K562 (cell line): ENCODE measurements at regions of chr1 and their contacts with region 1.

Region 1: DNA sequence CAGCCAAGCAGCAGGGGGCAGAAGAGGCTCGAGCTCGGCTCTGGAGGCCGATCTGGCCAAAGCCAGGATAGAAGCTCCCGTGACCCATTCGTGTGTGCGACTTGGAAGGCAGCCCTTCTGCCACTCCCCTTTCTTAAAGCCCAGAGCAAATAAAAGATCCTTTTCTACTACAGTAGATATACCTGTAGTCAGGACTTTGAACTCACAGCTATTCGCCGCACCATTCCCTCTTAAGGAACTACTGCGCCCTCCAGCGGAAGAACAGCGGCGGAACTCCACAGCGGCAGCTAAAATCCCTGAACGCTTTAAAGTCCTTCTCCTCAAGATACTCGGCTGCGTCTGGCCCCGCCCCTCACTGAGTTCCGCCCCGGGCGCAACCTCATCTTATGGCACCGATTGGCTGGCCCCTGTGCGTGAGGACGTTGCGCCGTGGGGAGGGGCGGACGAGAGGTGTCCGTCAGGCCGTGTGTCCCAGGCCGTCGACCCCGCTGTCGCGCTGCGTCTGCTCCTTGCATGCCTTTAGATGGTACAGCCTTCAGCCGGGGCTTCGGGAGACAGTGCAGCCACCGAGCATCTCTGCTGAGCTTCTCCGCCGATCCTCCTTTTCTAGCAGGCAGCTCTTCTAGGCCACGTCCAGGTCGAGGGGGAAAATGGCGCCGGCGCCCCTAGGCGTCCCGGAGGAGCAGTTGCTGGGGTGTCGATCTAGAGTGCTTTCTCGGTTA is at the start of gene LRIG2:
- DNase-seq: peak; percentile 96 to 100 (median 97)
- ATAC-seq: peak; percentile 97
- H3K4me3 ChIP-seq: peak within 1 kb of the TSS; percentile 96
- H3K27ac ChIP-seq: peak within 1 kb of the TSS; percentile 96
- H3K4me1 ChIP-seq: peaks cover 16% of the 10 kb centered on the region in 2 experiments
- H3K27me3 ChIP-seq: no peaks in the 10 kb centered on the region
- CTCF ChIP-seq: peak; percentile 75 to 97 (median 95)
- EP300 ChIP-seq: no peak; the same call in 1 of the 2 replicates
- POLR2A ChIP-seq: peak; percentile 98
- RAD21 ChIP-seq: peak; percentile 81 to 87
- polyA plus RNA-seq, gene LRIG2: 1.8 to 3.3 TPM

Region 2: GRCh38 chr1:112809253-112809684 is 263.6 kb before region 1 on chr1:
- CTCF ChIA-PET with region 1: interaction called, 7 read pairs
- POLR2A ChIA-PET with region 1: interaction called, 3 read pairs
- in situ Hi-C with region 1: no loop called
- intact Hi-C with region 1: loop called (anchors 2 kb)
- DNase-seq: peak; percentile 78 to 88 (median 82)
- ATAC-seq: peak; percentile 97
- H3K4me3 ChIP-seq: no peak overlapping the region
- H3K27ac ChIP-seq: no peak overlapping the region
- H3K4me1 ChIP-seq: peaks cover 2 to 6% of the 10 kb centered on the region in 2 experiments; a peak in 3 of 5 replicates
- H3K27me3 ChIP-seq: peaks cover 19 to 20% of the 10 kb centered on the region in 2 experiments; a peak in 4 of 5 replicates
- CTCF ChIP-seq: peak; percentile 89 to 98 (median 95)
- EP300 ChIP-seq: no peak
- POLR2A ChIP-seq: no peak
- RAD21 ChIP-seq: peak; percentile 94 to 98

Region 3: DNA sequence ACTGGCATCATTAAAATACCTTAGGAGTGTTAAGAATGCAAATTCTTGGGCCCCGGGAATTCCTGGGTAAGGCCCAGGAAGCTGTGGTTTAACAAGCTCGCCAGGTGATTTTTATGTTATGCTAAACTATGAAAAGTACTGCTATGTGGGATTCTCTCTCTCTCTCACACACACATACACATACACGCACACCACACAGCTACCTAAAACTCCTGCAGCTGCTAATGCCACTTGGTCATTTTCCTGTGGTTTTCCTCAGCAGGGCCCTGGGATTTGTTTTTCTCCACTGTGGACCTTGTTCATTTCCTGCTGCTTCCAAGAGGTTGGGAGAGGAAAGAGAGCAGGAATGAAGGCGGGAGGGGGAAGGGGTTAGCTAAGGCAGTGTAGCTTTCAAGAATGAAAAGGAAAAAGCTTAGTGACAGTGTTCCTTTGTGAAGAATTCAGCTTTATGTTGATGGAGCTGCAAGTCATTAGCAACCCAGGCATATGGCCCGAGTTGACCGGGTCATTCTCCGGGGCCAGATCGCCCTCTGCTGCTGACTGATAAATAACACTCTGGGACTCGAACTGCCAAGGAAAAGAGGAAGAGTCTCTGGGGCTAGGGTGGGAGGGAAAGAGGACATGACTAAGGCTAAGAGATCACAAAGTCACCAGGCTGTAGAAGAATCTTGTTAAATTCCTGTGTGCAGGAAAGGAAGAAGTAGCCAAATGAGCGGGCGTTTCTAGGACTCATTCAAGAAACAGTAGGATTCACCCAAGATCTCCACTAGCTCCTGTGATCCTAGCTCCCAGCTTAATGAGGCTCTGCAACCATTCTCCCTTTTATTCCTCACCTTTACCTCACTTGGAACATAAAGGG is 30.4 kb before region 1 on chr1:
- CTCF ChIA-PET with region 1: no interaction called
- POLR2A ChIA-PET with region 1: interaction called, 14 read pairs
- in situ Hi-C with region 1: no loop called
- intact Hi-C with region 1: loop called (anchors 2 kb)
- DNase-seq: peak; percentile 85 to 96 (median 90)
- ATAC-seq: peak; percentile 97
- H3K4me3 ChIP-seq: no peak overlapping the region
- H3K27ac ChIP-seq: peak overlapping the region; percentile 72
- H3K4me1 ChIP-seq: peaks cover 18 to 49% of the 10 kb centered on the region in 2 experiments
- H3K27me3 ChIP-seq: no peaks in the 10 kb centered on the region
- CTCF ChIP-seq: peak; percentile 90 to 98 (median 93)
- EP300 ChIP-seq: peak; percentile 73
- POLR2A ChIP-seq: no peak
- RAD21 ChIP-seq: peak; percentile 98

Region 4: DNA sequence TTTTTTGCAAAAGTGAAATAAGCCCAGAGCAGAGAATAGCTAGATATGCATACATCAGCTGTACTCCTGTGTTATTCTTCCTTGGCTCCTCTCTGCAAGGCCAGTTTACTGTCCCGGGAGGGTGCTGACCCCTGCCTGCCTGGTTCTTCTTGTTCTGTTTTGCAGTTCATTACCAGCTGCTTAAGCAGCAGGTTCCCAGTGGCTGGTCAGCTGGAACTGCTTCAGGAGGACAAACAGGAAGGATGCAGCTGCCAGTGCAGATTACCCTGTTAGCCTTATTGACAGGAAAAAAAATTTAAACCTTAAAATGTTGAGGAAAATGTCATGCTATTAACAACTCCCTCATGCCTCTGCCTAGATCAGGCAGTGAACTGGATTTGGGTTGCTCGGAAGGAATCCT is 15.9 kb before region 1 on chr1:
- CTCF ChIA-PET with region 1: no interaction called
- POLR2A ChIA-PET with region 1: interaction called, 48 read pairs
- in situ Hi-C with region 1: no loop called
- intact Hi-C with region 1: no loop called
- DNase-seq: no peak
- ATAC-seq: peak; percentile 28; the same call in 1 of the 3 replicates
- H3K4me3 ChIP-seq: no peak overlapping the region
- H3K27ac ChIP-seq: no peak overlapping the region
- H3K4me1 ChIP-seq: peaks cover 7 to 14% of the 10 kb centered on the region in 2 experiments; a peak in 4 of 5 replicates
- H3K27me3 ChIP-seq: no peaks in the 10 kb centered on the region
- CTCF ChIP-seq: peak in 1 of 3 experiments; percentile 7; a peak in 1 of 6 replicates
- EP300 ChIP-seq: no peak
- POLR2A ChIP-seq: no peak
- RAD21 ChIP-seq: no peak

Region 5: DNA sequence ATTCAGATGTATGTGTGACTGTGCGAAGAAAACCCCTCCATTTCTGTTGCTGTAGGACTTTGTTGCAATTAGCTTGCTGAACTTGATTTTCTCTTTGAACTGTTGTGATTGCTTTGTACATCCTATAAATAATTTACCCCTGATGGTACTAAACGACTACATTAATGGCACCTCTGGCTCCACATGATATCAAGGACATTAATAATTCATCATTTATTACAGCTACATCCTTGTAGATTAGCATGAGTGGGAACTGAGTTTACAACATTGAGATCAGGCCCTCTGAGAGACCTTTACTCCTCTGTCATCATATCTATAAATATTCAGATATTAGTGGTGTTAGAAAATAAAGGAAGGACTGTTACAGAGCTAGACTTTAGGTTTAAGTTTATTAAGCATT is 13.6 kb after region 1 on chr1:
- CTCF ChIA-PET with region 1: no interaction called
- POLR2A ChIA-PET with region 1: interaction called, 17 read pairs
- in situ Hi-C with region 1: no loop called
- intact Hi-C with region 1: no loop called
- DNase-seq: no peak
- ATAC-seq: no peak
- H3K4me3 ChIP-seq: no peak overlapping the region
- H3K27ac ChIP-seq: no peak overlapping the region
- H3K4me1 ChIP-seq: peaks cover 3 to 10% of the 10 kb centered on the region in 2 experiments; a peak in 3 of 5 replicates
- H3K27me3 ChIP-seq: no peaks in the 10 kb centered on the region
- CTCF ChIP-seq: no peak
- EP300 ChIP-seq: no peak
- POLR2A ChIP-seq: no peak
- RAD21 ChIP-seq: no peak

Region 6: DNA sequence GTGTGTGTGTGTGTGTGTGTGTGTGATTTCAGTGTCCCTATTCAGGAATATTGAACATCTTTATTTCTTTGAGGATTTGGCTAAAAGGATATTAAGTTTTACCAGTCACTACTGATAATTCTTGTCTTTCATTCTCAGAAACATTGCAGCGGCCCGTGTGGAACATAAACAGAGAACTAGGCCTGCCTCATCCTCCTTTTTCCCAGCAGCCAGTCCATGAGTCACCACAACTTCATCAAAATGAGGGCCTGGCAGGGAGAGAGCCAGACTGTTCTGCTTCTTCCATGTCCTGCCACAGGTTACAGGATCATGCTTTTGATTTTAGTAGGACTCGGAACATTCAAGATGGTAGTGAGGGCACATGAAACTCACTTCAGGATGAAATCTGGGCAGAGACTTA is 50.8 kb after region 1 on chr1:
- CTCF ChIA-PET with region 1: no interaction called
- POLR2A ChIA-PET with region 1: no interaction called
- in situ Hi-C with region 1: no loop called
- intact Hi-C with region 1: no loop called
- DNase-seq: no peak
- ATAC-seq: no peak
- H3K4me3 ChIP-seq: no peak overlapping the region
- H3K27ac ChIP-seq: no peak overlapping the region
- H3K4me1 ChIP-seq: no peaks in the 10 kb centered on the region
- H3K27me3 ChIP-seq: no peaks in the 10 kb centered on the region
- CTCF ChIP-seq: no peak
- EP300 ChIP-seq: no peak
- POLR2A ChIP-seq: no peak
- RAD21 ChIP-seq: no peak

Region 7: DNA sequence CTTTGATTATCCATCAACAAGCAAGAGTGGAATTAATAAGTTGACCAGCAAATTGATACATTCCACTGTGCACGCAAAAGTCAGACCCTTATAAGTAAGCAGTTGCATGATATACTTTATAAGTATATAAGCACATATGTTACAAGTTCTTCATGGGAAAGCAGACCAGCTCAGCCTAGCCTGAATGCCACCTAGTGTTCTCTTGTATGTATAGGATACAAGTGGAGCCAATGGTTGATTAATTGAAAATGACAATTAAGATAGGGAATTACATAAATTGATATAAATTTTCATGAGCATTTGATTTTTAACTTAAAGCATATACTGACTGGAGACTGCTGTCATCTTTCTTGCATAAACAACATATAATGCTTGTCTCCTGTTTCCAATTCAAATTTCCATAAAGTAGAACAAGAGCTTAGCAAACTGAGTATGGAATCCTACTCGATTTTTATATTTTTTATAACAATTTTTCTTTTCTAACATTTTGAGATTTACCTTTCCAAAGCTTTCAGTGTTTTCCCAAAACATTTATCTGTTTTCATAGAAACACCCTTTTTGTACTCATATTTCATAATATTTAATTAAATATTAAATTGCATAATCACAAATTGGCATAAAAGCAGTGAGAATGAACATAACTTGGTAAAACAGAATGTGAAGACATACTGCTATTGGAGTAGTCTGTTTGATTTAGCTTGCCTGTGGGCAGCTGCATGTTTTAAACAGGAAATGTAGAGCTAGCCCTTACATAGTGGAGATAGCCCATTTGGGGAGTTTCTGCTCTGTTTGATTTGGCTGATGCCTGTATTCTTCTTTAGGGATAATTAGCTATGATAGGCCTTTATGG is 380.2 kb after region 1 on chr1:
- CTCF ChIA-PET with region 1: no interaction called
- POLR2A ChIA-PET with region 1: no interaction called
- in situ Hi-C with region 1: no loop called
- intact Hi-C with region 1: loop called (anchors 5 kb)
- DNase-seq: peak; percentile 17 to 40 (median 24)
- ATAC-seq: peak; percentile 79
- H3K4me3 ChIP-seq: no peak overlapping the region
- H3K27ac ChIP-seq: no peak overlapping the region
- H3K4me1 ChIP-seq: no peaks in the 10 kb centered on the region
- H3K27me3 ChIP-seq: no peaks in the 10 kb centered on the region; a peak in 1 of 5 replicates
- CTCF ChIP-seq: peak; percentile 27 to 63 (median 49); a peak in 5 of 6 replicates
- EP300 ChIP-seq: no peak
- POLR2A ChIP-seq: no peak
- RAD21 ChIP-seq: peak; percentile 49 to 73